Heart right ventricle (tissue), 16 donors: ENCODE measurements at regions of chrX and their contacts with region 1.

Region 1: GRCh38 chrX:131841496-131842410 is 181.3 kb upstream of the STK26 start:
- DNase-seq: peak in 1 of 2 donors; percentile 11
- ATAC-seq: peak in 7 of 8 donors; percentile 47 to 73 (median 69)
- H3K4me3 ChIP-seq: no peak overlapping the region
- H3K27ac ChIP-seq: no peak overlapping the region
- H3K4me1 ChIP-seq: peaks cover 0 to 5% (median 0%) of the 10 kb centered on the region in 9 donors
- H3K27me3 ChIP-seq: peaks cover 0 to 80% (median 0%) of the 10 kb centered on the region in 7 donors
- CTCF ChIP-seq: peak; percentile 61 to 92 (median 72)

Region 2: GRCh38 chrX:131477498-131477897 is 364.3 kb before region 1 on chrX:
- intact Hi-C with region 1: no loop called
- DNase-seq: no peak
- ATAC-seq: no peak
- H3K4me3 ChIP-seq: no peak overlapping the region
- H3K27ac ChIP-seq: no peak overlapping the region
- H3K4me1 ChIP-seq: no peaks in the 10 kb centered on the region
- H3K27me3 ChIP-seq: peaks cover 0 to 12% (median 0%) of the 10 kb centered on the region in 7 donors
- CTCF ChIP-seq: no peak

Region 3: DNA sequence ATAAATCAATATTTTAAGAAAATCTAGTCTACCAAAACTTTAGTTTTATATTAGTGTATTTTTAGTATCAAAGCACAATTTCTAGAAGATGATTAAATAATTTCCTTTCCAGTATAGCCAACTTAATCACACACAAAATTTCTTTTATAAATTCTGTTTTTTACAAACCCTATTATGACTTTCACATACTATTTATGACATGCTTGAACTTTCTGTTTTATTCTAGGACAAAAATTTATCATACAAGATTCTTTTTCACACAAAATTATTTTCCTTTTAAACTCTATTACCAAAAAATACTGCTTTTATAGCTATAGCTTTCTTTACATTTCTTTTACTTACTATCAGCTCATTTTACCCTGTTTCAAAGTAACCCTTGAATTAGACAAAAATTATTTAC is 148.4 kb before region 1 on chrX:
- intact Hi-C with region 1: no loop called
- DNase-seq: no peak
- ATAC-seq: no peak
- H3K4me3 ChIP-seq: no peak overlapping the region
- H3K27ac ChIP-seq: no peak overlapping the region
- H3K4me1 ChIP-seq: no peaks in the 10 kb centered on the region
- H3K27me3 ChIP-seq: peaks cover 0 to 91% (median 0%) of the 10 kb centered on the region in 7 donors
- CTCF ChIP-seq: no peak

Region 4: GRCh38 chrX:132059973-132060540 is 218.3 kb after region 1 on chrX:
- intact Hi-C with region 1: loop called in 1 of 10 experiments (anchors 10 kb)
- DNase-seq: no peak
- ATAC-seq: no peak
- H3K4me3 ChIP-seq: no peak overlapping the region
- H3K27ac ChIP-seq: no peak overlapping the region
- H3K4me1 ChIP-seq: no peaks in the 10 kb centered on the region
- H3K27me3 ChIP-seq: peaks cover 0 to 85% (median 0%) of the 10 kb centered on the region in 7 donors
- CTCF ChIP-seq: no peak

Region 5: GRCh38 chrX:132071260-132071659 is 229.5 kb after region 1 on chrX:
- intact Hi-C with region 1: loop called in 5 of 10 experiments (anchors 5 to 10 kb)
- DNase-seq: no peak
- ATAC-seq: no peak
- H3K4me3 ChIP-seq: peak overlapping the region in 1 of 10 donors; percentile 3
- H3K27ac ChIP-seq: no peak overlapping the region
- H3K4me1 ChIP-seq: no peaks in the 10 kb centered on the region
- H3K27me3 ChIP-seq: peaks cover 0 to 65% (median 0%) of the 10 kb centered on the region in 7 donors
- CTCF ChIP-seq: peak in 6 of 9 donors; percentile 22 to 44 (median 34)

Region 6: DNA sequence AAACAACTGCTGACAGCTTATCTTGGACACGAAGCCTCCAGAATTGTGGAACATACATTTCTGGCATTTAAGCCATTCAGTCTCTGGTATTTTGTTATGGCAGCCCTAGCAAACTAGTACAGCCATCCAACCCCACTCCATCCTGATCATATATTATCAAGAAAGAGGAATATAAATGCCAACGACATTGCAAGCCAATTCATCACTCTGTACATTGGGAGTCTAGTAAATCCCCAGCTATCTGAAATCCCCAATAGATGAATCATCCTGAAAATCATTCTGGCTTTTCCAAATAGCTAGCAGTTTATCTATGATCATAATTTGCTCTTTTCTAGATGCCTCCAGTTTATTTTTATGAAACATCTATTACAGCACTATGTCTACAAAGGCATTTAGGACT is 244.9 kb after region 1 on chrX:
- intact Hi-C with region 1: loop called in 1 of 10 experiments (anchors 10 kb)
- DNase-seq: no peak
- ATAC-seq: no peak
- H3K4me3 ChIP-seq: no peak overlapping the region
- H3K27ac ChIP-seq: no peak overlapping the region
- H3K4me1 ChIP-seq: no peaks in the 10 kb centered on the region
- H3K27me3 ChIP-seq: peaks cover 0 to 97% (median 0%) of the 10 kb centered on the region in 7 donors
- CTCF ChIP-seq: no peak

Region 7: GRCh38 chrX:132219343-132219768 is 377.6 kb after region 1 on chrX and contains the start of gene RAP2C:
- intact Hi-C with region 1: loop called in 1 of 10 experiments (anchors 10 kb)
- DNase-seq: peak; percentile 63 to 76
- ATAC-seq: peak; percentile 70 to 92 (median 87)
- H3K4me3 ChIP-seq: peak within 1 kb of the TSS; percentile 35 to 89 (median 81)
- H3K27ac ChIP-seq: peak within 1 kb of the TSS; percentile 69 to 98 (median 96)
- H3K4me1 ChIP-seq: peaks cover 0 to 36% (median 6%) of the 10 kb centered on the region in 9 donors
- H3K27me3 ChIP-seq: peaks cover 0 to 20% (median 0%) of the 10 kb centered on the region in 7 donors
- CTCF ChIP-seq: peak; percentile 22 to 70 (median 60)
- total RNA-seq, gene RAP2C: 14.3 to 27.7 (median 16.5) TPM

Region 8: GRCh38 chrX:132235488-132235887 is 393.7 kb after region 1 on chrX:
- intact Hi-C with region 1: no loop called
- DNase-seq: no peak
- ATAC-seq: no peak
- H3K4me3 ChIP-seq: no peak overlapping the region
- H3K27ac ChIP-seq: no peak overlapping the region
- H3K4me1 ChIP-seq: no peaks in the 10 kb centered on the region
- H3K27me3 ChIP-seq: peaks cover 0 to 10% (median 0%) of the 10 kb centered on the region in 7 donors
- CTCF ChIP-seq: no peak

Region 9: GRCh38 chrX:132333351-132333750 is 491.6 kb after region 1 on chrX:
- intact Hi-C with region 1: no loop called
- DNase-seq: no peak
- ATAC-seq: no peak
- H3K4me3 ChIP-seq: no peak overlapping the region
- H3K27ac ChIP-seq: no peak overlapping the region
- H3K4me1 ChIP-seq: no peaks in the 10 kb centered on the region
- H3K27me3 ChIP-seq: peaks cover 0 to 6% (median 0%) of the 10 kb centered on the region in 7 donors
- CTCF ChIP-seq: no peak

Region 10: GRCh38 chrX:132615391-132616131 is 773.8 kb after region 1 on chrX:
- intact Hi-C with region 1: loop called in 2 of 10 experiments (anchors 5 to 10 kb)
- DNase-seq: peak in 1 of 2 donors; percentile 9
- ATAC-seq: no peak
- H3K4me3 ChIP-seq: no peak overlapping the region
- H3K27ac ChIP-seq: no peak overlapping the region
- H3K4me1 ChIP-seq: no peaks in the 10 kb centered on the region
- H3K27me3 ChIP-seq: peaks cover 0 to 39% (median 0%) of the 10 kb centered on the region in 7 donors
- CTCF ChIP-seq: peak in 7 of 9 donors; percentile 30 to 64 (median 38)

Region 11: GRCh38 chrX:132631579-132632232 is 790.0 kb after region 1 on chrX:
- intact Hi-C with region 1: loop called in 4 of 10 experiments (anchors 5 to 10 kb)
- DNase-seq: no peak
- ATAC-seq: peak in 1 of 8 donors; percentile 60
- H3K4me3 ChIP-seq: no peak overlapping the region
- H3K27ac ChIP-seq: no peak overlapping the region
- H3K4me1 ChIP-seq: no peaks in the 10 kb centered on the region
- H3K27me3 ChIP-seq: peaks cover 0 to 69% (median 0%) of the 10 kb centered on the region in 7 donors
- CTCF ChIP-seq: peak in 7 of 9 donors; percentile 41 to 58 (median 54)